Mammary epithelial cell (primary cell): ENCODE measurements at regions of chr17 and their contacts with region 1.

Region 1: GRCh38 chr17:63984651-63985386 is 12.1 kb upstream of the SCN4A start:
- DNase-seq: peak; percentile 84
- H3K4me3 ChIP-seq: no peak overlapping the region
- H3K27ac ChIP-seq: no peak overlapping the region
- H3K4me1 ChIP-seq: peaks cover 20% of the 10 kb centered on the region
- H3K27me3 ChIP-seq: no peaks in the 10 kb centered on the region
- CTCF ChIP-seq: no peak

Region 2: DNA sequence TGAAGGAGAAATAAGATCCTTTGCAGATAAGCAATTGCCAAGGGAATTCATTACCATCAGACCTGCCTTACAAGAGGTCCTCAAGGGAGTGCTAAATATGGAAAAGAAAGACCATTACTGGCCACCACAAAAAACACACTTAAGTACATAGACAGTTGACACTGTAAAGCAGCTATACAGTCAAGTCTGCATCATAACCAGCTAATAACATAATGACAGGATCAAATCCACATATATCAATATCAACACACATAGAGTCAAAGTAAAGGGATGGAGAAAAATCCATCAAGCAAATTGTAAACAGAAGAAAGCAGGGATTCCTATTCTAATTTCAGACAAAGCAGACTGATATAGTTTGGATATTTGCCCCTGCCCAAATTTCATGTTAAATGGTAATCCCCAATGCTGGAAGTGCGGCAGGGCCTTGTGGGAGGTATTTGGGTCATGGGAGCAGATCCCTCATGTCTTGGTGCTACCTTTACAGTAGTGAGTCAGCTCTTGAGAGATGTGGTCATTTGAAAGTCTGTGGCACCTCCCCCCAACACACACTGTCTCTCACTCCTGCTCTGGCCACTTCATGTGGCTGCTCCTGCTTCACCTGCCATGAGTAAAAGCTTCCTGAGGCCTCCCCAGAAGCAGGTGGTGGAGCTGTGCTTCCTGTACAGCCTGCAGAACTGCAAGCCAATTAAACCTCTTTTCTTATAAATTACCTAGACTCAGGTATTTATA is 986.0 kb before region 1 on chr17:
- CTCF ChIA-PET with region 1: no interaction called
- dilution Hi-C with region 1: no loop called
- in situ Hi-C with region 1: no loop called
- intact Hi-C with region 1: no loop called
- DNase-seq: peak; percentile 19
- H3K4me3 ChIP-seq: no peak overlapping the region
- H3K27ac ChIP-seq: no peak overlapping the region
- H3K4me1 ChIP-seq: peaks cover 25% of the 10 kb centered on the region
- H3K27me3 ChIP-seq: no peaks in the 10 kb centered on the region
- CTCF ChIP-seq: no peak

Region 3: DNA sequence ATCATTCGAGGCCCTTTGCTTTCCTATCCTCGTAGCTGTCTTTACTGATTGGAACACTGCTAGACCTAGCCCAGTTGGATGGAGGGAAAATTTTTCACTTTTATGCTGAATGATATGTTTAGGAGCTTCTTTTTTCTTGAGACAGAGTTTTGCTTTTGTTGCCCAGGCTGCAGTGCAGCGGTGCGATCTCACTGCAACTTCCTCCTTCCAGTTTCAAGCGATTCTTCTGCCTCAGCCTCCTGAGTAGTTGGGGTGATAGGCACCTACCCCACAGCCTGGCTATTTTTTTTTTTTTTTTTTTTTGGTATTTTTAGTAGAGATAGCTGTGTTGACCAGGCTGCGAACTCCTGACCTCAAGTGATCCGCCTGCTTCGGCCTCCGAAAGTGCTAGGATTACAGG is 174.8 kb before region 1 on chr17:
- CTCF ChIA-PET with region 1: no interaction called
- dilution Hi-C with region 1: no loop called
- in situ Hi-C with region 1: no loop called
- intact Hi-C with region 1: no loop called
- DNase-seq: no peak
- H3K4me3 ChIP-seq: no peak overlapping the region
- H3K27ac ChIP-seq: no peak overlapping the region
- H3K4me1 ChIP-seq: no peaks in the 10 kb centered on the region
- H3K27me3 ChIP-seq: no peaks in the 10 kb centered on the region
- CTCF ChIP-seq: no peak

Region 4: DNA sequence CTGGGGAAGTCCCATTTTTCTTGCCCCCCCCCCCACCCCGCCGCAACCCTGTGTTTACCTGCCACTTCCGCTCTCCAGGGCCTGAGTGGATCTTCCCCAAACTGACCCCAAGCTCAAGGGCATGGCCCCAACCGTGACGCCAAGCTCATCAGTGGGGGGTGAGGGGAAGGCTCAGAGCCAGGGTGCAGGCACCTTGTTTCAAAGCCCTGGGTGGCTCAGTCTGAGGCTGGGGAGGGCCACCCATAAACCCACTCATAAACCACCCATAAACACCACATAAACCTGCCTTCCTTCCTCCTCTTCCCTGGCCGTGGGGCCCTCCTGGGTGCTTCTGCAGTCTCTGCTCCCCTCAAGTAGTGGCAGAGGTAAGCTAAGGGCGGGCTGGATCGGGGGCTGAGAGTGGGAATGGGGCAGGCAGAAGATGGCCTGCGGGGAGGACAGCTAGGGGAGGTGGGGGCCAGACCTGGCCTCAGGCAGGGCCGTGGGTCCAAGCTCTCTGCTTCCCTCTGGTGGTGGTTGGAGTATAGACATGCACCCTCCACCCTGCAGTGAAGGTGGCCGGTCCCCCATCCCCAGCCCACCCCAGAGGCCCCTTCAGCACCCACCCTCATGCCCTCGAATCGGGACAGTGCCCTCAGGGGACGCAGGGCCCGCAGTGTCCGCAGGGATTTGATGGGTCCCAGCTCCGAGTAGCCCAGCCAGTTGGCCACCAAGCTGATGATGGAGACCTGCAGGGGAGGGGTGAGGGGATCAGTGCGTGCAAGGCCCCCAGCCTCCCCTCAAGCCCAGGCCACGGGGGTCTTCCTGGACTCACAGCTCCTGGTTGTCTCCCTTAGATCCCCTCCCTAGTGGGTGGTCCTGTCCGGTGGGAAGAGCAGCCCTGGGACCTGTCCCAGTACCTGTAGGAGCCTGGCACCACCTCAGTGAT is 38.1 kb before region 1 on chr17:
- CTCF ChIA-PET with region 1: interaction called, 23 read pairs
- dilution Hi-C with region 1: no loop called
- in situ Hi-C with region 1: no loop called
- intact Hi-C with region 1: no loop called
- DNase-seq: no peak
- H3K4me3 ChIP-seq: no peak overlapping the region
- H3K27ac ChIP-seq: no peak overlapping the region
- H3K4me1 ChIP-seq: no peaks in the 10 kb centered on the region
- H3K27me3 ChIP-seq: no peaks in the 10 kb centered on the region
- CTCF ChIP-seq: peak; percentile 45 to 73

Region 5: GRCh38 chr17:64020056-64020766 is 35.4 kb after region 1 on chr17 and contains the start of gene ICAM2:
- CTCF ChIA-PET with region 1: no interaction called
- dilution Hi-C with region 1: loop called (anchors 5 kb)
- in situ Hi-C with region 1: no loop called
- intact Hi-C with region 1: no loop called
- DNase-seq: no peak
- H3K4me3 ChIP-seq: no peak within 1 kb of the TSS
- H3K27ac ChIP-seq: no peak within 1 kb of the TSS
- H3K4me1 ChIP-seq: no peaks in the 10 kb centered on the region
- H3K27me3 ChIP-seq: no peaks in the 10 kb centered on the region
- CTCF ChIP-seq: no peak
- total RNA-seq, gene ICAM2: 0.49 to 2.8 TPM